GM12878 (cell line): ENCODE measurements at regions of chr2 and their contacts with region 1.

Region 1: DNA sequence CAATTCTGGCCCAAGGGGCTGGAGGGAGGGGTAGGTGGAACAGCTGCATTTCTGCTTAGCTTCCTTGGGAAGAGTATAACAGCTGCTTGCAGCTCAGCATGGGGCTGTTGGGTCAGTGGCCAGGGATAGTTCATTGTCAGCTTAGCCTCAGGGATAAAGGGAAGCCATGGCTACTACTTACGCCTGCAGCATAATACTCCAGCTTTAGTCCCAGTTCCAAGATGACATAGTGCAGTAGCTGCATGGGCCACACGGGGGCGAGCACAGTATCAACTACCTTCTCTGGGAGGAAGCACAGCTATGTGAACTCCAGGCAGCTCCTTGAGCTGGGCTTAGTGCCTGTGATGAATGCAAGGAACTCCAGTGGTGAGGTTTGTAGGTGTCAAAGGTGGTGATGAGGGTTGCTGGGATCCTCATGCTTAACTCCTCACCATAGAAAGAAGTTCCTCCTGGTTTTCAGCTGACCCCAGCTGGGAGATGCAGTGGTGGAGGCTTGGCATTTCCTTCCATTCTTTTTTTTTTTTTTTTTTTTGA is 35.4 kb upstream of the RHOB start:
- DNase-seq: no peak
- ATAC-seq: peak; percentile 100
- H3K4me3 ChIP-seq: no peak overlapping the region
- H3K27ac ChIP-seq: no peak overlapping the region
- H3K4me1 ChIP-seq: no peaks in the 10 kb centered on the region
- H3K27me3 ChIP-seq: no peaks in the 10 kb centered on the region
- CTCF ChIP-seq: peak; percentile 84 to 94 (median 92)
- EP300 ChIP-seq: no peak
- POLR2A ChIP-seq: no peak
- RAD21 ChIP-seq: peak; percentile 80

Region 2: DNA sequence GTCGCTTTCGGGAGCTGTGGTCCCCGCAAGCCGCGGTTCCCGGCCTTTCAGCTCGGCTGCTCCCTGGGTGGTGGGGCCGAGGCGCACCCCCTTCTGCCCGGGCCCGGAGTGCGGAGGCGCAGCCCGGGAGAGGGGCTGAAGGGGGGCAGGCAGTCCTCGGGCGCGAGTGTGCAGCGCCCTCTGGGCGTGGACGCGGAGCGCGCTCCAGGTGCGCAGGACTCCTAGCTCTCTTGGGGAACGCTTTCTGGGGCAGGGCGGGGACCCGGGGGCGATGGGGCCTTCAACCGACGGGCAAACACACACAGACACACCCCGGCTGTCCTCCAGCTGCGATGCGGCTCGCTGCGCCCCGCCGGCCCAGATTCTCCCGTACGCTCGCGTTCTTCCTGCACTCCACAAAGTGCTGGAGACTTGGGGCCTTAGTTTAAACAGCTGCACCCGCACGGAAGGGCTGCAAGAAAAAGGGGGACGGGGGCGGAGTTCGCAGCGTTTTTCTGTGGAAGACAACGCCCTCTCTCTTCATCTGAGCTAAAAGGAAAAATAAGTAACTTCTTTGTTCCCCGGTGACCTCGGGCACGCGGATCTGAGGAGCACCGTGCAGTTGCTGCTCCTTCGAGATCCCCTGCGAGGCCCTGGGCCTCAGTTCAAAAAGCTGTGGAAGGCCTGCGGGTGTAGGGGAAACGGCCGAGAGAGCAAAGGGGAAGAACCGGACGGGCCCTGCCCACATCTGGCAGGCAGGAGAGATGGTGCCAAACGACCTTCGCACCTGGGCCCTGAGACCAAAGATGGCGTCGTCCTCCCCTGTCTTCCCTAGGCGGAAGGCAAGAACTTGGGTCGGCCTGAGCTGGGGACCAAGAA is 185.9 kb before region 1 on chr2:
- CTCF ChIA-PET with region 1: no interaction called
- POLR2A ChIA-PET with region 1: no interaction called
- RAD21 ChIA-PET with region 1: no interaction called
- SMC1A ChIA-PET with region 1: no interaction called
- in situ Hi-C with region 1: no loop called
- intact Hi-C with region 1: no loop called
- DNase-seq: no peak
- ATAC-seq: peak; percentile 81
- H3K4me3 ChIP-seq: peak overlapping the region; percentile 73; the same call in 1 of the 2 replicates
- H3K27ac ChIP-seq: no peak overlapping the region
- H3K4me1 ChIP-seq: peaks cover 29% of the 10 kb centered on the region
- H3K27me3 ChIP-seq: no peaks in the 10 kb centered on the region; a peak in 1 of 4 replicates
- CTCF ChIP-seq: peak; percentile 61 to 90 (median 84)
- EP300 ChIP-seq: no peak
- POLR2A ChIP-seq: no peak; the same call in 1 of the 2 replicates
- RAD21 ChIP-seq: peak; percentile 87

Region 3: GRCh38 chr2:20424300-20425290 is 13.2 kb after region 1 on chr2:
- CTCF ChIA-PET with region 1: interaction called, 148 read pairs
- POLR2A ChIA-PET with region 1: interaction called, 4 read pairs
- RAD21 ChIA-PET with region 1: interaction called, 44 read pairs
- SMC1A ChIA-PET with region 1: interaction called, 46 read pairs
- in situ Hi-C with region 1: no loop called
- intact Hi-C with region 1: no loop called
- DNase-seq: peak; percentile 57
- ATAC-seq: peak; percentile 76
- H3K4me3 ChIP-seq: peak overlapping the region; percentile 17; the same call in 1 of the 2 replicates
- H3K27ac ChIP-seq: peak overlapping the region; percentile 68
- H3K4me1 ChIP-seq: peaks cover 34% of the 10 kb centered on the region
- H3K27me3 ChIP-seq: no peaks in the 10 kb centered on the region
- CTCF ChIP-seq: no peak
- EP300 ChIP-seq: no peak
- POLR2A ChIP-seq: 0 out of 2 replicates have a peak, but pooled peaks have one; percentile 32
- RAD21 ChIP-seq: no peak

Region 4: GRCh38 chr2:20525041-20526035 is 113.9 kb after region 1 on chr2:
- CTCF ChIA-PET with region 1: interaction called, 11 read pairs
- POLR2A ChIA-PET with region 1: interaction called, 7 read pairs
- RAD21 ChIA-PET with region 1: interaction called, 5 read pairs
- SMC1A ChIA-PET with region 1: interaction called, 5 read pairs
- in situ Hi-C with region 1: no loop called
- intact Hi-C with region 1: no loop called
- DNase-seq: peak; percentile 76
- ATAC-seq: peak; percentile 95
- H3K4me3 ChIP-seq: no peak overlapping the region
- H3K27ac ChIP-seq: peak overlapping the region; percentile 64
- H3K4me1 ChIP-seq: peaks cover 18% of the 10 kb centered on the region
- H3K27me3 ChIP-seq: no peaks in the 10 kb centered on the region
- CTCF ChIP-seq: peak in 1 of 3 experiments; percentile 37; a peak in 1 of 6 replicates
- EP300 ChIP-seq: peak; percentile 25 to 62; a peak in 2 of 4 replicates
- POLR2A ChIP-seq: 0 out of 2 replicates have a peak, but pooled peaks have one; percentile 49
- RAD21 ChIP-seq: no peak

Region 5: GRCh38 chr2:20642055-20642971 is 230.9 kb after region 1 on chr2:
- CTCF ChIA-PET with region 1: interaction called, 72 read pairs
- POLR2A ChIA-PET with region 1: no interaction called
- RAD21 ChIA-PET with region 1: interaction called, 38 read pairs
- SMC1A ChIA-PET with region 1: interaction called, 34 read pairs
- in situ Hi-C with region 1: no loop called
- intact Hi-C with region 1: loop called (anchors 1 kb)
- DNase-seq: no peak
- ATAC-seq: peak; percentile 100
- H3K4me3 ChIP-seq: no peak overlapping the region
- H3K27ac ChIP-seq: no peak overlapping the region
- H3K4me1 ChIP-seq: no peaks in the 10 kb centered on the region
- H3K27me3 ChIP-seq: no peaks in the 10 kb centered on the region
- CTCF ChIP-seq: peak; percentile 87 to 96 (median 91)
- EP300 ChIP-seq: no peak
- POLR2A ChIP-seq: no peak
- RAD21 ChIP-seq: peak; percentile 98

Region 6: GRCh38 chr2:21067859-21068537 is 656.6 kb after region 1 on chr2:
- CTCF ChIA-PET with region 1: no interaction called
- POLR2A ChIA-PET with region 1: no interaction called
- RAD21 ChIA-PET with region 1: no interaction called
- SMC1A ChIA-PET with region 1: no interaction called
- in situ Hi-C with region 1: no loop called
- intact Hi-C with region 1: no loop called
- DNase-seq: no peak
- ATAC-seq: no peak
- H3K4me3 ChIP-seq: no peak overlapping the region
- H3K27ac ChIP-seq: no peak overlapping the region
- H3K4me1 ChIP-seq: no peaks in the 10 kb centered on the region
- H3K27me3 ChIP-seq: no peaks in the 10 kb centered on the region
- CTCF ChIP-seq: no peak
- EP300 ChIP-seq: no peak
- POLR2A ChIP-seq: no peak
- RAD21 ChIP-seq: no peak